Endothelial cell of umbilical vein (primary cell): ENCODE measurements at regions of chr1 and their contacts with region 1.

Region 1: GRCh38 chr1:96416111-96416595 is 305.4 kb upstream of the PTBP2 start:
- DNase-seq: peak; percentile 93
- H3K4me3 ChIP-seq: no peak overlapping the region
- H3K27ac ChIP-seq: peak overlapping the region; percentile 69
- H3K4me1 ChIP-seq: peaks cover 4% of the 10 kb centered on the region
- H3K27me3 ChIP-seq: no peaks in the 10 kb centered on the region
- CTCF ChIP-seq: no peak
- POLR2A ChIP-seq: no peak

Region 2: DNA sequence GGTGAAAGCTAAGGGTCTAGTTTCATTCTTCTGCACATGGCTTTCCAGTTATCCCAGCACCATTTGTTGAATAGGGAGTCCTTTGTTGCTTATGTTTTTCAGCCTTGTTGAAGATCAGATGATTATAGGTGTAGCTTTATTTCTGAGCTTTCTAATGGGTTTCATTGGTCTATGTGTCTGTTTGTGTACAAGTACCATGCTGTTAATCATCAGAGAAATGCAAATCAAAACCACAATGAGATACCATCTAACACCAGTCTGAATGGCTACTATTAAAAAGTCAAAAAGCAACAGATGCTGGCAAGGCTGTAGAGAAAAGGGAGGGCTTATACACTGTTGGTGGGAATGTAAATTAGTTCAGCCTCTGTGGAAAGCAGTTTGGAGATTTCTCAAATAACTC is 16.1 kb before region 1 on chr1:
- CTCF ChIA-PET with region 1: no interaction called
- POLR2A ChIA-PET with region 1: no interaction called
- dilution Hi-C with region 1: no loop called
- intact Hi-C with region 1: loop called (anchors 2 kb)
- DNase-seq: no peak
- H3K4me3 ChIP-seq: no peak overlapping the region
- H3K27ac ChIP-seq: no peak overlapping the region
- H3K4me1 ChIP-seq: no peaks in the 10 kb centered on the region
- H3K27me3 ChIP-seq: no peaks in the 10 kb centered on the region
- CTCF ChIP-seq: no peak
- POLR2A ChIP-seq: no peak

Region 3: GRCh38 chr1:96508233-96508632 is 92.1 kb after region 1 on chr1:
- CTCF ChIA-PET with region 1: no interaction called
- POLR2A ChIA-PET with region 1: no interaction called
- dilution Hi-C with region 1: no loop called
- intact Hi-C with region 1: no loop called
- DNase-seq: no peak
- H3K4me3 ChIP-seq: no peak overlapping the region
- H3K27ac ChIP-seq: no peak overlapping the region
- H3K4me1 ChIP-seq: no peaks in the 10 kb centered on the region
- H3K27me3 ChIP-seq: peaks cover 0 to 2% of the 10 kb centered on the region in 2 experiments
- CTCF ChIP-seq: no peak
- POLR2A ChIP-seq: no peak